HepG2 (cell line): ENCODE measurements at regions of chr2 and their contacts with region 1.

Region 1: DNA sequence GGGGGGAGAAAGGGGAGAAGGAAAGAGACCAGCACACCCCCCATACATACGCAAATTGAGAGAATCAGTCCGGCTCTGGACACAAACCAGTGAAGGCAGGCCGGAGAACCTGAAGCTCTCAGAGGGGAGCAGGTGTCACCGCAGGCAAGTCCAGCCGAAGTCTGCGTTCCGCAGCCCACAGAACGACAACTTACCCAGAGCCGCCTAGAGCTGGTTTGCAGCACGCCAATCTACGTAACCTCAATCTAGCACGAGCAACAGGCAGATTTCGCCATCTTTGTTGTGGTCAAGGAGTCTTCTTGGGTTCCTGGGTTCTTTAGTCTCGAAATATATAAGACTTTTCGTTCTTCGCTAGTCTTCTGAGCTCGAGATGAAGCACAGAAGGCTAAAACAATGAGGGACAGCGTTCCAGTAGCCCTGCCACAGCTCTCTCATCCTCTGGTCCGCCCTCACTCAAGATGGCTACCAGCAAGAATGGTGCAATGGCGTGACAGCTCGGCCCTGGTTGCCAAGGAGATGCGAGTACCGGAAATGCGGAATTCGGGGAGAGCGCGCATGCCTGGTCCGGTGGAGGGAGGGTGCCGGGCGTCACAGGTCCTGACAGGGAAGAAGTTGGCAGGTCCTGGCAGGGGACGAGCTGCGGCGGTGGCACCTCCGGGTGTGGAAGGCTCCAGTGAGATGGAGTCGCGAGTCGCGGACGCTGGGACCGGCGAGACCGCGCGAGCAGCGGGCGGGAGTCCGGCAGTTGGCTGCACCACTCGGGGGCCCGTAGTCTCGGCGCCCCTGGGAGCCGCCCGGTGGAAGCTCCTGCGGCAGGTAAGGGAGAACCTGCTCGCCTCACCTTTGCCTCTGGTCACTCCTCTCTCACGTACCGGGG is at the starts of genes CAMKMT and PREPL:
- DNase-seq: peak; percentile 97
- ATAC-seq: peak; percentile 90
- H3K4me3 ChIP-seq: peak within 1 kb of the TSS; percentile 75 to 95 (median 82)
- H3K27ac ChIP-seq: peak within 1 kb of the TSS; percentile 93
- H3K4me1 ChIP-seq: peaks cover 29% of the 10 kb centered on the region
- H3K27me3 ChIP-seq: no peaks in the 10 kb centered on the region; a peak in 1 of 5 replicates
- CTCF ChIP-seq: peak; percentile 28; the same call in 1 of the 2 replicates
- EP300 ChIP-seq: peak in 1 of 2 experiments; percentile 100; a peak in 2 of 4 replicates
- POLR2A ChIP-seq: peak; percentile 97 to 99
- RAD21 ChIP-seq: peak; percentile 6; the same call in 1 of the 2 replicates
- total RNA-seq, gene CAMKMT: 15.3 and 20.8 TPM in 2 replicates
- total RNA-seq, gene PREPL: 34.3 and 56.1 TPM in 2 replicates

Region 2: GRCh38 chr2:43251171-43251731 is 1110.3 kb before region 1 on chr2:
- CTCF ChIA-PET with region 1: no interaction called
- POLR2A ChIA-PET with region 1: no interaction called
- in situ Hi-C with region 1: no loop called
- intact Hi-C with region 1: no loop called
- DNase-seq: peak; percentile 46
- ATAC-seq: peak; percentile 55
- H3K4me3 ChIP-seq: no peak overlapping the region
- H3K27ac ChIP-seq: no peak overlapping the region
- H3K4me1 ChIP-seq: peaks cover 32% of the 10 kb centered on the region
- H3K27me3 ChIP-seq: no peaks in the 10 kb centered on the region
- CTCF ChIP-seq: no peak
- EP300 ChIP-seq: no peak
- POLR2A ChIP-seq: no peak
- RAD21 ChIP-seq: no peak

Region 3: GRCh38 chr2:44291281-44292248 is 70.0 kb before region 1 on chr2:
- CTCF ChIA-PET with region 1: no interaction called
- POLR2A ChIA-PET with region 1: interaction called, 6 read pairs
- in situ Hi-C with region 1: no loop called
- intact Hi-C with region 1: loop called (anchors 2 kb)
- DNase-seq: peak; percentile 95
- ATAC-seq: peak; percentile 98
- H3K4me3 ChIP-seq: peak overlapping the region in 2 of 3 experiments; percentile 12 to 13; a peak in 1 of 6 replicates
- H3K27ac ChIP-seq: no peak overlapping the region
- H3K4me1 ChIP-seq: peaks cover 64% of the 10 kb centered on the region
- H3K27me3 ChIP-seq: peaks cover 2 to 6% of the 10 kb centered on the region in 2 experiments; a peak in 2 of 5 replicates
- CTCF ChIP-seq: peak; percentile 94
- EP300 ChIP-seq: peak in 1 of 2 experiments; percentile 46; a peak in 1 of 4 replicates
- POLR2A ChIP-seq: no peak
- RAD21 ChIP-seq: peak; percentile 95

Region 4: GRCh38 chr2:44348400-44348799 is 13.2 kb before region 1 on chr2:
- CTCF ChIA-PET with region 1: no interaction called
- POLR2A ChIA-PET with region 1: interaction called, 21 read pairs
- in situ Hi-C with region 1: no loop called
- intact Hi-C with region 1: no loop called
- DNase-seq: no peak
- ATAC-seq: no peak
- H3K4me3 ChIP-seq: no peak overlapping the region
- H3K27ac ChIP-seq: no peak overlapping the region
- H3K4me1 ChIP-seq: peaks cover 6% of the 10 kb centered on the region; the same call in 1 of the 2 replicates
- H3K27me3 ChIP-seq: no peaks in the 10 kb centered on the region
- CTCF ChIP-seq: no peak
- EP300 ChIP-seq: no peak
- POLR2A ChIP-seq: no peak
- RAD21 ChIP-seq: no peak

Region 5: GRCh38 chr2:44377486-44377885 is 15.9 kb after region 1 on chr2:
- CTCF ChIA-PET with region 1: no interaction called
- POLR2A ChIA-PET with region 1: interaction called, 10 read pairs
- in situ Hi-C with region 1: no loop called
- intact Hi-C with region 1: no loop called
- DNase-seq: no peak
- ATAC-seq: no peak
- H3K4me3 ChIP-seq: no peak overlapping the region
- H3K27ac ChIP-seq: no peak overlapping the region
- H3K4me1 ChIP-seq: no peaks in the 10 kb centered on the region
- H3K27me3 ChIP-seq: no peaks in the 10 kb centered on the region
- CTCF ChIP-seq: no peak
- EP300 ChIP-seq: no peak
- POLR2A ChIP-seq: no peak
- RAD21 ChIP-seq: no peak

Region 6: GRCh38 chr2:44817673-44818335 is 456.2 kb after region 1 on chr2:
- CTCF ChIA-PET with region 1: no interaction called
- POLR2A ChIA-PET with region 1: no interaction called
- in situ Hi-C with region 1: no loop called
- intact Hi-C with region 1: no loop called
- DNase-seq: no peak
- ATAC-seq: no peak
- H3K4me3 ChIP-seq: no peak overlapping the region
- H3K27ac ChIP-seq: no peak overlapping the region
- H3K4me1 ChIP-seq: 0 out of 2 replicates have a peak, but pooled peaks cover 4% of the 10 kb centered on the region
- H3K27me3 ChIP-seq: peaks cover 0 to 15% of the 10 kb centered on the region in 2 experiments; a peak in 1 of 5 replicates
- CTCF ChIP-seq: no peak
- EP300 ChIP-seq: no peak
- POLR2A ChIP-seq: no peak
- RAD21 ChIP-seq: no peak